ENCODE measurements at regions of chr1 and their contacts with region 1.

Region 1: GRCh38 chr1:57799490-57800115 is 375.7 kb upstream of the DAB1 start:
- DNase-seq: no peak
- ATAC-seq: no peak
- H3K4me3 ChIP-seq: no peak overlapping the region
- H3K27ac ChIP-seq: no peak overlapping the region
- H3K4me1 ChIP-seq: no peaks in the 10 kb centered on the region
- H3K27me3 ChIP-seq: no peaks in the 10 kb centered on the region
- CTCF ChIP-seq: no peak
- POLR2A ChIP-seq: no peak

Region 2: GRCh38 chr1:57854436-57854835 is 54.8 kb after region 1 on chr1:
- intact Hi-C with region 1: loop called in 1 of 10 experiments (anchors 5 kb)
- DNase-seq: no peak
- ATAC-seq: no peak
- H3K4me3 ChIP-seq: no peak overlapping the region
- H3K27ac ChIP-seq: no peak overlapping the region
- H3K4me1 ChIP-seq: no peaks in the 10 kb centered on the region
- H3K27me3 ChIP-seq: no peaks in the 10 kb centered on the region
- CTCF ChIP-seq: no peak
- POLR2A ChIP-seq: no peak

Measured in heart left ventricle (tissue), 16 donors.